AG04450 (cell line): ENCODE measurements at regions of chr13 and their contacts with region 1.

Region 1: GRCh38 chr13:100646030-100646673 is 28.4 kb downstream of the TMTC4 start:
- DNase-seq: no peak
- H3K4me3 ChIP-seq: no peak overlapping the region
- H3K27ac ChIP-seq: no peak overlapping the region
- H3K27me3 ChIP-seq: no peaks in the 10 kb centered on the region
- CTCF ChIP-seq: peak; percentile 63

Region 2: DNA sequence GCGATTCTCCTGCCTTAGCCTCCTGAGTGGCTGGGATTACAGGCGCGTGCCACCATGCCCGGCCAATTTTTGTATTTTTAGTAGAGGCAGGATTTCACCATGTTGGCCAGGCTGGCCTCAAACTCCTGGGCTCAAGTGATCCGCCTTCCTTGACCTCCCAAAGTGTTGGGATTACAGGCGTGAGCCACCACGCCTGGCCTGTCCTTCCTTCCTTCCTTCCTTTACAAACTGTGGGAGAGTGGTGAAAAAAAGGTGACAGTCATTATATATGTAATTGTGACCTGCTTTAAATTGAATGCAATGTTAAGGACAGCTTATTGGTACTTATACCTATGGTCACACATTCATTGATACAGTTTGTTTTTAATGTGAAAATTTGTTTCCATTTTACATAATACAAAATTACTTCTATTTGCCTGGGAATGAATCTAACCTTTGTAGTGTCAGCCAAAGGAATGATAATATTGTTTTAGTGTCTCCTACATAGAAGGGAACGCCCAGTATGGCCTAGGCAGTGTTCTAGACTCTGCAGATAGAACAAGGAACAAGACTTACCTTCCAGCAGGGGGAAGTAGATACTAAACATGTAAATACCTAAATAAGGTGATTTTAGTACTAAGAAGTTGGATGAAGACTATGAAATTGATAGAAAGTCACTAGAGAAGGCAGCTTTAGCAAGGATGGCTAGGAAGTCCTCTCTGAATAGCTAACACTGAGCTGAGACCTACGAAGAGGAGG is 203.9 kb before region 1 on chr13:
- CTCF ChIA-PET with region 1: no interaction called
- POLR2A ChIA-PET with region 1: no interaction called
- DNase-seq: no peak
- H3K4me3 ChIP-seq: no peak overlapping the region
- H3K27ac ChIP-seq: peak overlapping the region; percentile 22
- H3K27me3 ChIP-seq: no peaks in the 10 kb centered on the region
- CTCF ChIP-seq: no peak

Region 3: DNA sequence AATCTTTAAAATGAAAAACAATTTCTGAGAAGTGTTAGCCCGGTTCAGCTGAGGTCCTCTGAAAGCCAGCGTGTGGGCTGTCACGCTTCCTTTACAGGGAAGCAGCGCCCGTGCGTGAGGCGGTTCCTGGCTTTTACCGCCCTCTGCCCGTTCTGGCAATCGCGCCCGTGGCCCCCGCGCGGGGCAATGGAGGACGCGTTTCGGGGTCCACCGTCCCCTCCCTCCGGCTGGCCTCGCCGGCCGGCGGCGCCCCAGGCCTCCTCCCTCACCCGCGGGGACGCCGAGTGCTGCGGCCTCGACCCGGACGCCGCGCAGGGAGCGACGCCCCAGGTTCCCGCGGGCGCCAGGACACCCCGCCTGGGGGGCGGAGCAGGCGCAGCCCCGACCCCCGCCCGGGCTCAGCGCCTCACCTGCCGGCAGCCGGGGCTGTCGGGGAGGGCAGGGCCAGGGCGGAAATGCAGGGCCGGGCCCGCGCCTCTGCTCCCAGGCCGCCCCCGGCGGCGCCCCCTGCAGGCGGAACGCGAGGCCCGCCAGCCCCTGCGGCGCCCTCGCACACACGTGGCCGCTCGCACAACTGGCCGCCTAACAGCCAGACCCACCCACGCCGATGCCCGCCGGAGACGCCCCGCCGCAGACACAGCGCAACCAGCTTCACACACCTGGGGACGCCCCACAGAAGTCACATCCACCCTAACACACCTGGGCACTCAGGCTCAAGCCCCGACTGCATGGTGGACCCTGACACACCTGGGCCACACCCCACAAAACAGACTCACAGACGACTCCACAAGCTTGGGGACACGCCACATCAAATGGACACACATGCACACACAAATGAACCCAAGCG is 57.6 kb before region 1 on chr13 and contains the start of gene GGACT:
- CTCF ChIA-PET with region 1: no interaction called
- POLR2A ChIA-PET with region 1: no interaction called
- DNase-seq: no peak
- H3K4me3 ChIP-seq: peak within 1 kb of the TSS; percentile 67
- H3K27ac ChIP-seq: no peak within 1 kb of the TSS
- H3K27me3 ChIP-seq: no peaks in the 10 kb centered on the region
- CTCF ChIP-seq: peak; percentile 46
- polyA plus RNA-seq, gene GGACT: 6.2 and 7.6 TPM in 2 replicates

Region 4: DNA sequence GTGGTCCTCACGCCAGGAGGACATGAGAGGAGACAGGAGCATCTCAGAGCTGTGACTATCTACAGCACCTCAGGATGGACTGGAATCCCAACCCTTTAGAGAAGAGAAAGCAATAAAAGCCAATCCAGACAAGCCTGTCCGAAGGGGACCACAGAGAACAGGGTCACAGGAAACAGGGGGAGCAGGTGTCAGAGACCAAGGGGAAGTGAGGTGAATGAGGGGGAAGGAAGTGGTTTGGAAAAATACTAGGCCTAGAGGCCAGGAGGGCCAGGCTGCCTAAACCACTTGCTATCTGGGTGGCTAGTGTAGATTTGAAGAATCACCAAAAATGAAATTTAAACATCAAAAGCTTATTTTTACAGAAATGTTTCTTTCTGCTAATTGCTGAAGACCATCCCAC is 12.2 kb after region 1 on chr13:
- CTCF ChIA-PET with region 1: interaction called, 11 read pairs
- POLR2A ChIA-PET with region 1: no interaction called
- DNase-seq: no peak
- H3K4me3 ChIP-seq: no peak overlapping the region
- H3K27ac ChIP-seq: no peak overlapping the region
- H3K27me3 ChIP-seq: no peaks in the 10 kb centered on the region
- CTCF ChIP-seq: no peak

Region 5: DNA sequence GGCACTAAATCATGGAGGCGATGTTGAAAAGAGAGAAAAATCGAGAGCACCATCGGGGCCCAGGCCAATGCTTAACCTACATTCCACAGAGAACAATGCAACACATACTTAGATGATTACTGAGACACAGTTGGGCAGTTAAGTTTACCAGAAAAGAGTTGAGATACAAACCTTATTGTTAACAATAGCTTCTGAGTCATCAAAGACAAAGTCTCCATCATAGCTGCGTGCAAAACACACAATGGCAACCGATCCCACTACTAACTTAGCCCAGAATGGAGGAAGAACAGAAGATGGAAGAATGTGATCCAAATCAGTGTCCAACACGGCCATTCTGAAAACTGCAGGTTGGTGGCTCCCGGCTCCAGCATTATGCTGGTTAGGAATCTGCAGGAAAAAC is 22.3 kb after region 1 on chr13:
- CTCF ChIA-PET with region 1: interaction called, 10 read pairs
- POLR2A ChIA-PET with region 1: no interaction called
- DNase-seq: no peak
- H3K4me3 ChIP-seq: no peak overlapping the region
- H3K27ac ChIP-seq: no peak overlapping the region
- H3K27me3 ChIP-seq: no peaks in the 10 kb centered on the region
- CTCF ChIP-seq: no peak

Region 6: GRCh38 chr13:100954430-100955305 is 308.5 kb after region 1 on chr13:
- CTCF ChIA-PET with region 1: no interaction called
- POLR2A ChIA-PET with region 1: no interaction called
- DNase-seq: no peak
- H3K4me3 ChIP-seq: no peak overlapping the region
- H3K27ac ChIP-seq: no peak overlapping the region
- H3K27me3 ChIP-seq: peaks cover 2% of the 10 kb centered on the region
- CTCF ChIP-seq: no peak

Region 7: GRCh38 chr13:101955764-101956163 is 1309.6 kb after region 1 on chr13:
- CTCF ChIA-PET with region 1: interaction called, 11 read pairs
- POLR2A ChIA-PET with region 1: no interaction called
- DNase-seq: no peak
- H3K4me3 ChIP-seq: no peak overlapping the region
- H3K27ac ChIP-seq: no peak overlapping the region
- H3K27me3 ChIP-seq: no peaks in the 10 kb centered on the region
- CTCF ChIP-seq: no peak